ENCODE measurements at regions of chr19 and their contacts with region 1.

Region 1: DNA sequence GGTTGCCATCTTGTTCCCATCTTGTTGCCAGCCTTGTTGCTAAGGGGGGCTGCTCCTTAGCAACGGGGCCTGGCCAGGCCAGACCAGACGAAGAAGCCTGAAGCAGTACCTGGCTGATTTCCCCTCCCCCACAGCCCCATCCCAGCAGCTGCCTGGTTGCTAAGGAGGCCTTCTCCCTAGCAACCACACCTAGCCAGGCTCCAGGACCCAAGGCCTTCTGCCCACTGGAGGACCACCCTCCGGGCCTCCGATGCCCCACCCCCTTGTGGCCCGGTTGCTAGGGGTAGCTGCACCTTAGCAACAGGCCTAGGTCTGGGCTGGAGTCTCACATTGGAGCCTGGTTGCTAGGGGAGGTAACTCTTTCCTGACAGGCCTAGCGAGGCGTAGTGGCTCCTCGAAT is 3.9 kb downstream of the PRRG2 start:
- DNase-seq: no peak

Region 2: GRCh38 chr19:49506575-49507105 is 78.4 kb before region 1 on chr19:
- intact Hi-C with region 1: no loop called
- DNase-seq: no peak

Region 3: GRCh38 chr19:49546825-49547565 is 38.0 kb before region 1 on chr19:
- intact Hi-C with region 1: no loop called
- DNase-seq: no peak

Region 4: DNA sequence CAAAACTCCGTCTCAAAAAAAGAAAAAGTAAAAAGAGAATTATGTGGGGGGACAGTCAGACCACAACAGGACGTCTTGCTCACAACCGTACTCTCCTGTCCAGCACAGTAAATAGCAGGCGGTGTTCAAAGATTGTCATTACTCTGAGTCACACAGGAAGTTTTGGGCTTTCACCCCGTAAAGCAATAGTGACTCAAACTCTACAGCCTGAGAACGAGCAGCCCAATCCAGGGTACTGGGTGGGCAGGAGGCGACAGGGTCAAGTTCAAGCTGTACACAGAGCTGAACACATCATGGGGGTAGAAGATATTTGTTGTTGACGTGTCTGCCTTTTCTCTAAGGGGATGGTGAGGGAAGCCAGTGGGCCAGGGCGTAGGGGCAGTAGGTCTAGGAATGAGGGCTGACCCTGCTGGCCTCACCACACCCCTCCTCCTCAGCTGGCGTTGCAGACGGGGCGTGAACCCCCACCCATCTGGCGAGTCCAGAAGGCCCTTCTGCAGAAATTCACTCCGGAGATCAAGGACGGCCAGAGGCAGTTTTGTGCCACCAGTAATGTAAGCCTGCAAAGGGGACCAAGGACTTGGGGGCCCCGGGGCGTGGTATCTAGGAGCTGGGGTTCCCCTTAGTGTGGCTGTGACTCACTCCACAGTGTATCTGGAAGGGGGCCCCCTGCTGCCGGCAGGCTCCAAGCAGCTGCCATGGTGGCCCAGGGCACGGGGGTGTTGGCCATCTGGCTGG is 29.2 kb after region 1 on chr19:
- intact Hi-C with region 1: no loop called
- DNase-seq: no peak

Region 5: DNA sequence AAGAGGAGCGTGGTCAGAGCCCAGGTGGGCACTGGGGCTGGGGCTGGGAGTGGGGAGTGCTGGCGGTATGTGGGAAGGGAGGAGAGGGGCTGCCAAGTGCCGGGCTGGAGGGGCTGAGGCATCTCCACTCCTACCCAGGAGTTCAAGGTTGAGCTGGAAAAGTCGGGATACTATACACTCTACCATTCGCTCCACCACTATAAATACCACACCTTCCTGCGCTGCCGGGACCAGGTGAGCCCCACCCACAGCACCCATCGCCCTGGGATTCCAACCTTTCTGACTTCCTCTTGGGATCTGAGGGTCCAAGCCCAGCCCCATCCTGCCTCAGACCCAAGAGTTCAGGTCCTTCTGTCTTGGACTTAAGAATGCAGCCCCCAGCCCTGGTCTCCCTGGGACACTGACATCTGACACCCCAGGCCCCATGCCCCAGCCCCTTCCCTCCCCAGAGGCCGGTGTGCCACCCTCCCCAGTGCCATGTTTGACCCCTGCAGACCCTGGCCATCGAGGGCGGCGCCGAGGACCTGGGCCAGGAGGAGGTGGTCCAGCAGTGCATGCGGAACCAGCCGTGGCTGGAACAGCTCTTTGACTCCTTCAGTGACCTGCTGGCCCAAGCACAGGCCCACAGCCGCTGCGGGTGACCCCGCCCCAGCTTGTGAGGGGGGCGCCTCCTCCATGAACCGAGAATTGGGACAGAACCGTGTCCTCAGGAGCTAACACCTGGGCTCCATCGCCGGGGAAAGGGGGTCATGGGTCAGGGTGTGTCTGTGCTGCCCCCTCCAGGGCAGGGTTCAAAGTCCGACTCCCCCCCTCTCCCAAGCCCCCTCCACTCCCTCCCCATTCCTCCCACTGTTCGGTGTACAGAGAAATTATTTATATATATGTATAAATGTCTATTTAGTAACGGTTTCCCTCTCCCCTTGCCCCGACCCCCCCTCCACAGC is 40.2 kb after region 1 on chr19:
- intact Hi-C with region 1: loop called in 1 of 2 experiments (anchors 1 kb)
- DNase-seq: no peak

Region 6: DNA sequence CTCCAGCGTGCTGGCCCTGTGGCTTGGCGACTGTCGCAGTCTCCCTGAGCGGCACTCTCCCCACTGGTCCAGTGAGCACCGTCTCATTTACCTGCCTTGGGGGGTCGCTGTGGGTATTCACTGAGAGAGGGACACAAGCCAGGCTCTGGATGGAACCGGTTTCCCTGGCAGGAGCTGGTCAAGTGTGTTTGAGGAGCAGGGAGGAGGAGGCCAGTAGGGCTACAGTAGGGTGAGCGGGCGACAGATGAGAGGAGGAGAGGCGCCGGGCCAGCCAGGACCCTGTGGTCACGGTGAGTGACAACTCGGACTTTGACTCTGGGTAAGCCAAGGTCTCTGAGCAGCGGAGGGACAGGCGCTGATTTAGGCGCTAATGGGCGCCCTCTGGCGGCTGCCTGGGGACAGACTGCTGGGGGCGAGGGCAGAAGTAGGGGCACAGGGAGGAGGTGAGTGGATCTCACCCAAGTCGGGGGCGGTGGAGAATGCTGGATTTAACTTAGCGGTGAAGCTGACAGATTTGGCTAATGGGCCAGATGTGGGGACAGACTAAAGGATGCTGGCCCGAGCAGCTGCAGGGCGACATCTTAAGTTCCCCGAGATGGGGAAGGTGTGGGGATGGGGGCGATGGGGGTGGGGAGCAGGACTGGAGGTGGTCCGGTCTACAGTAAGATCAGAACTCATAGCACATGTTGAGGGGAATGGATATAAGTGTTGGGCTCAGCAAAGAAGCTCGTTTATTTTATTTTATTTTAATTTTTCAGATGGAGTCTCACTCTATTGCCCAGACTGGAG is 87.3 kb after region 1 on chr19:
- intact Hi-C with region 1: loop called in 1 of 2 experiments (anchors 5 kb)
- DNase-seq: peak; percentile 94

Measured in posterior vena cava (tissue), 2 donors.